CD8-positive, alpha-beta T cell (primary cell): ENCODE measurements at regions of chr9 and their contacts with region 1.

Region 1: GRCh38 chr9:90379771-90380170 is 262.9 kb downstream of the DIRAS2 start:
- DNase-seq: no peak
- ATAC-seq: no peak
- H3K4me3 ChIP-seq: no peak overlapping the region
- H3K4me3 Mint-ChIP-seq: no peak overlapping the region
- H3K27ac ChIP-seq: no peak overlapping the region
- H3K27ac Mint-ChIP-seq: no peak overlapping the region
- H3K4me1 ChIP-seq: no peaks in the 10 kb centered on the region
- H3K4me1 Mint-ChIP-seq: no peaks in the 10 kb centered on the region
- H3K27me3 ChIP-seq: no peaks in the 10 kb centered on the region
- H3K27me3 Mint-ChIP-seq: peaks cover 10% of the 10 kb centered on the region
- CTCF ChIP-seq: no peak

Region 2: DNA sequence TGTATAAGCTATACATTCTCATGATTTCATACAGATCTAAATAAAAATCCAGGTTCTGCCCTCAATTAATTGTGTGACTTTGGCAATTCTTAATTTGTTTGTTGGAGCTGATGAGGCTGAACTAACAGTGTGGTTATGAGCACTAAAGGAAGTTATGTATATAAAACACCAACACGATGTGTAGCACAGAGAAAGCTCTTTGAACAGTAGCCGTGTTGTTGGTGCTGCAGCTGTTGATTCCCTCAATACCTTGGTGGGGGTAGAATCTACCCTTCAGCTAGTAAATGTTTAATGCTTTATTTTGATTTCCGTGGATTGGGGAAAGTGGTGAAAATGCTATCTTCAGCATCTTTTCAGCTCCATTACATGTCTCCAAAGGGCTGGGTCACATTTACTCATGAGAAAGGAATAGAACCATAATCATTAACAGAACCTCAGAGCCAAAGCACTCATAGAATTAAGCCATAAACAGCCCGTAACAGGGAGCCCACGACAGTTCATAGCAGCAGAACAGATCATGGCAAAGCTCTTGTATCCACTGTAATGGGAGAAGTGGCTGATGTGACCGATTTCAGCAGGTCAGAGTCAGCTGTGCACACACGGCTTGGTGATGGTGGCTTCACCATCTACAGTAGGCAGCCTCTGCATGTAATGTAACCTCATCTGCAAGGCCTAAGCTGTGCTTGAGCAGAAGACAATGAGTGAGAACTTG is 69.8 kb before region 1 on chr9:
- CTCF ChIA-PET with region 1: no interaction called
- POLR2A ChIA-PET with region 1: no interaction called
- intact Hi-C with region 1: loop called in 1 of 2 experiments (anchors 2 kb)
- DNase-seq: no peak
- ATAC-seq: no peak
- H3K4me3 ChIP-seq: no peak overlapping the region
- H3K4me3 Mint-ChIP-seq: no peak overlapping the region
- H3K27ac ChIP-seq: no peak overlapping the region
- H3K27ac Mint-ChIP-seq: no peak overlapping the region
- H3K4me1 ChIP-seq: no peaks in the 10 kb centered on the region
- H3K4me1 Mint-ChIP-seq: no peaks in the 10 kb centered on the region
- H3K27me3 ChIP-seq: no peaks in the 10 kb centered on the region
- H3K27me3 Mint-ChIP-seq: peaks cover 11% of the 10 kb centered on the region
- CTCF ChIP-seq: no peak